ENCODE measurements at regions of chr3 and their contacts with region 1.

Region 1: DNA sequence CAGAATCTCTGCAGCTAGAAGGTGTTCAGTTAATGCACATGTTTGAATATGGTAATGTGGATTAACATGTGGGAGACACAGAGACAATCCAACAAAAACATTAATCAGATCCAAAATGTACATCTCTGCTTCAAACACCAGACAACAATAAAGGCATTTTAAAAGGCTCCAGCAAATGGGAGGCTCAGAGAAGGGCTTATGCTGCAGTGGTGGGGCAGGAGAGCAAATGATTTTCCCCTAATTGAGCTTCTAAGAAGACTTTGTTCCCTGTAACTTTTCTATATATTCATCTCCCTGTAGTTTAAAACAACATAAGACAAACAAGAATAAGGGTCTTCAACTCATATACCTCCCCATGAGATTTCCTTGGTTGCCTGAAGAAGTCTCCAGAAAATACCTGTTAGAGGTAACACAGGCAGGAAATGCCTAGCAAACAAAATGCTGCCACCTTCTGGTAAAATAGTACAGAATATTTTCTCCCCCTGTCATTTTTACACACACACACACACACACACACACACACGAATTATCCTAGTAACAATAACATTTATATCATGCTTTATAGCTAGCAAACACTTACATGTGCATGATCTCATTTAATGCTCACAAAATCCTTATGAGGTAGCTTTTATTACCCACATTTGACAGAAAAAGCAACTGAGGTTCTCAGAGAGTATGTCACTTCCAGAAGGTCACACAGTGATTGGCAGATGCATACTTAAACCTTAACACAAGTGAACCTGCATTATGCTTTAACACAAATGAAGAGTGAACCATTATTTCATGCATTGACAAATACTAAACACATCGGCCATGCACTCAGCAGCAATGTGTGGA is 123.4 kb upstream of the MB21D2 start:
- DNase-seq: peak in 1 of 2 experiments; percentile 58
- H3K4me3 ChIP-seq: no peak overlapping the region
- H3K27ac ChIP-seq: no peak overlapping the region
- H3K4me1 ChIP-seq: no peaks in the 10 kb centered on the region
- H3K27me3 ChIP-seq: no peaks in the 10 kb centered on the region
- CTCF ChIP-seq: peak; percentile 81

Region 2: GRCh38 chr3:192467230-192468140 is 573.6 kb before region 1 on chr3:
- CTCF ChIA-PET with region 1: no interaction called
- POLR2A ChIA-PET with region 1: no interaction called
- intact Hi-C with region 1: loop called (anchors 5 kb)
- DNase-seq: peak; percentile 56 to 63
- H3K4me3 ChIP-seq: no peak overlapping the region
- H3K27ac ChIP-seq: no peak overlapping the region
- H3K4me1 ChIP-seq: no peaks in the 10 kb centered on the region
- H3K27me3 ChIP-seq: no peaks in the 10 kb centered on the region
- CTCF ChIP-seq: peak; percentile 100

Region 3: GRCh38 chr3:193129601-193130000 is 88.5 kb after region 1 on chr3:
- CTCF ChIA-PET with region 1: no interaction called
- POLR2A ChIA-PET with region 1: no interaction called
- intact Hi-C with region 1: loop called (anchors 5 kb)
- DNase-seq: peak in 1 of 2 experiments; percentile 24
- H3K4me3 ChIP-seq: no peak overlapping the region
- H3K27ac ChIP-seq: no peak overlapping the region
- H3K4me1 ChIP-seq: no peaks in the 10 kb centered on the region
- H3K27me3 ChIP-seq: peaks cover 24% of the 10 kb centered on the region; the same call in 1 of the 2 replicates
- CTCF ChIP-seq: peak; percentile 69